ENCODE measurements at regions of chr14 and their contacts with region 1.

Region 1: GRCh38 chr14:77067632-77068514 is 30.2 kb upstream of the CIPC start:
- DNase-seq: peak; percentile 74
- H3K4me3 Mint-ChIP-seq: no peak overlapping the region
- H3K27ac Mint-ChIP-seq: no peak overlapping the region
- H3K4me1 Mint-ChIP-seq: no peaks in the 10 kb centered on the region
- H3K27me3 Mint-ChIP-seq: peaks cover 54% of the 10 kb centered on the region

Region 2: DNA sequence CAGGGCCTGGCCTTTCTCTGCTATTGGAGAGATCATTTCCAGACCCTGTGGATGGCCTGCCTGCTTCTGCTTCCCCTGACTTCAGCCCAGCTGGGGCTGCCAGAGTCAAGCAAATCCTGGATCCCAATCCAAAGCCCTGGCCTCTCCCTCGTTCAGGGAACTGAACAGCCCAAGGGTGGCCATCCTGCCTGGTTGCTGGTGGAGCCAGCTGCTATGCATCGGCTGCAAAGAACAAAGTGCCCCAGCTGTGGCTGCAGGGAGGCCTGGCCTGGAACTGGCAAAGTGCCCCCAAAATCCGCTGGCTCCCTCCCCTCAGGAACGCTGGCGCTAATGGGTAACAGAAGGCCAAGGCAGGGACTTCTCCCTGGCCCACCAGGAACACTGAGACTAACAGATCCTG is 185.2 kb before region 1 on chr14:
- CTCF ChIA-PET with region 1: interaction called, 1,049 read pairs
- DNase-seq: no peak
- H3K4me3 Mint-ChIP-seq: no peak overlapping the region
- H3K27ac Mint-ChIP-seq: no peak overlapping the region
- H3K4me1 Mint-ChIP-seq: peaks cover 12% of the 10 kb centered on the region
- H3K27me3 Mint-ChIP-seq: peaks cover 34% of the 10 kb centered on the region

Region 3: DNA sequence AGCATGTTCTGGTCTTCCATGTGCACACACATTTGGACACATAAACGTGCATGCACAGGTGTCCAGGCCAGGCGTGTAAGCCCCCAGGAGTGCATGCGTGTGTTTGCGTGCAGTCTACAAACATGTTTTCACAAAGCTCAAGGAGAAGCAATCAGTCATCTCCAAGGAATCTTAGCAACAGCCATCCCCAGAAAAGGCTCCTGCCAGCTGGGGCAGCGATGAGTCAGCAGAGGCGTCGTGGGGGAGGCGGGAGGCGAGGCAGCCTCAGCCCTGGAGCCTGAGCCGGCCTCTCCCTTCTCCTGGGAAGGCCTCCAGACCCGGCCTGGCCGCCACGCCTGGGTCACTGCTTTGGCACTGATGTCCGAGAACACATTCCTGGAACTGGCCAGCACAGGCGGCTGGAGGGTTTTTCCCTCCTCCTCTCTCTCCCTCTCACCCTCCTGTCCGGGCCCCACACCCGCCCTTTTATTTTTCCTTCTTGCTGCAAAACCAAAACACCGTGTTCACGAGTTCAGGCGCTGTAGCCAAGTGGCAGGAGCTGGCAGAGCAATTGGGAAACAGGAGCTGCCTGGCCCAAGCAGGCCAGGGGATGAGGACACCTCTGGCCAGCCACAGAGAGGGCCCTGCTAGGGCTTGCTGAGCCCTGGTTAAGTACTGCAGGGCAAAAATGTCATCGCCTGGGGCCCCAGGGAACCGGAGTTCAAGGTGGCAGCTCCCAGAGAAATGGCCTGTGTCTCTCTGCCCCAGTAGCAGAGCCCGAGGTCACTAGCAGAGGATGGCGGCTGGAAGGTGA is 148.9 kb before region 1 on chr14:
- CTCF ChIA-PET with region 1: interaction called, 273 read pairs
- DNase-seq: no peak
- H3K4me3 Mint-ChIP-seq: no peak overlapping the region
- H3K27ac Mint-ChIP-seq: no peak overlapping the region
- H3K4me1 Mint-ChIP-seq: peaks cover 78% of the 10 kb centered on the region
- H3K27me3 Mint-ChIP-seq: peaks cover 22% of the 10 kb centered on the region

Region 4: DNA sequence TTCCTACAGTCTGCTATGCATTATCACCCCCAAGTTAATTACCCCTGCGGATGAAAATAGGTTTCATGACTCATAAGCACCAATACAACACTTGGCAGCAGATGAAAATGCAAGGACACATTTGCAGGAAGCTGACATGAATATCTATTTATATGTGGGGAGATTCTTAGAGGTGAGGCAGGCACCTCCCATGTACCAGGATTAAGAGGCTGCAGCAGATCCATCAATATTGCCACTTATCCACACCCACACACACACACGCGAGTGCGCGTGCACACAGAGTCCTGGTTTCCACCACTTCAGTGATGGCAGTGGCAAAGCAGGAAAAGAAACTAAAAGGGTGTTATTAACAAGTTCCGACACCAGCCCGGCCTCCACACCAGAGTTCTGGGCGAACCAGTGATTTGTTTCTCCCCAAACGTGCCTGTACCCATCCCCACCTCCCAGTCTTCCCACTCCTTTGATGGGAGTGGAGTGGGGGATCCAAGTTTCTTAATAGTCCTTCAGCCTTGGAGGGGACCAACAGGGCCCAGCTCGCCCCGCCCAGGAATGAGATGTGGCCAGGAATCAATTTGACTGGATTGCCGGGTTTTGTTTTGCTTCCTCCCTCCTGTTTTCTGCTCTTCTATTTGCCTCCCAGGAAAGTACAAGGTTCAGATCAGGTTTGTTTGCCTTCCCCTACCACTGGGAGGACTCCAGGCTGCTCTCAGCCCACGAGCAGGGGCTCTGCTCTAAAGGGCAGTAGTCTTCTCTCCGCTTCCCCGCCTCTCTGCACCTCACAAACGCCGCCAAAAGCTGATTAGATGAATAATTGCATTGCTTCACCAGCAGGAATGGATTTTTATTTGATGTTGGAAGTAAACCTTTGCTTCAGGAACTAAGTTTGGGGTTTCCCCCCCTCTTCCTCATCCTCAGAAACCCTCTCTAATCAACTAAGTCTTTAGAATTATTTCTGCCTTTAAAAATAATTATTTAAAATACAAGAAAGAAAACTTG is 44.6 kb before region 1 on chr14:
- CTCF ChIA-PET with region 1: interaction called, 13 read pairs
- DNase-seq: no peak
- H3K4me3 Mint-ChIP-seq: peak overlapping the region; percentile 2
- H3K27ac Mint-ChIP-seq: peak overlapping the region; percentile 77
- H3K4me1 Mint-ChIP-seq: peaks cover 52% of the 10 kb centered on the region
- H3K27me3 Mint-ChIP-seq: peaks cover 4% of the 10 kb centered on the region

Region 5: GRCh38 chr14:77092676-77093075 is 24.8 kb after region 1 on chr14:
- CTCF ChIA-PET with region 1: interaction called, 28 read pairs
- DNase-seq: no peak
- H3K4me3 Mint-ChIP-seq: no peak overlapping the region
- H3K27ac Mint-ChIP-seq: no peak overlapping the region
- H3K4me1 Mint-ChIP-seq: peaks cover 24% of the 10 kb centered on the region
- H3K27me3 Mint-ChIP-seq: peaks cover 22% of the 10 kb centered on the region

Region 6: DNA sequence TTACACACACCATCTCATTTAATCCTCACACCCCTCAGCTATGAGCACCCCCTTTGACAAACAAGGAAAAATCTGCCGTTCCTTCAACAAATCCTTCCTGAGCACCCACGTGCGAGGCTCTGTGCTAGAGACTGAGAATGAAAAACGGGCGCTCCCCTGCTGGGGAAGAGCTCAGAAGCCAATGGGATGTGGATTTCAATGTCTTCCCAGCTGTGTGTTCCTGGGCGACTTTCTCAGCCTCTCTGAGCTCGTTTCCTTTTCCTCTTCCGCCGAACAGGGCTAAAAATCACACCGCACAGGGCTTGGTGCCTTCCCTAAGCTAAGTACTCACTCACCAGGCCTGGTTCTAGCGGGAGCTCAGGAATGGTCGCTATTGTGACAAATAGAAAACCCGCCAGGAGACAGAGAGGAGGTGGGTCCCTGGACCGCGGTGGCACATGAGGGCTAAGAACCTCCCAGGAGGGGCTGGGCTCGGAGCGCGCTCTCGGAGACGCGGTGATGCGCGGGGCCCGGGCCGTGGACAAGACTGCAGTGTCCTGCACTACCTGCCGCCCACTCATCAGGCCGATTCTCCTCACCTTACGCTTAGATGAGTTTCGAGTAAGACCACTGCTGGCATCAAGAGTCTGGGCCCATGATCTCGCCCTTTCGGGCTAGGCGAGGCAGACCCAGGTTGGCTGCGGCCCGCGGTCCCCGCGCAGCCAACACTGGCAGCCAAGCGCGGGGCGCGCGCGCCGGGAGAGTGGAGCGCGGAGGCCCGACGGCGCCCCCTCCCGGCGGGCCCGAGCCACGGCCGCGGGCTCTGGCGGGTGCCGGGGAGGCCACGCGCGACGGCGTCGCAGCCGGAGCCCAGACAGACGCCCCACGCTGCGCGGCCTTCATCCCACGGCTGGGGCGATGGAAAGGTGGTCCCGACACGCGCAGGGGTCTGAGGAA is 56.7 kb after region 1 on chr14:
- CTCF ChIA-PET with region 1: interaction called, 32 read pairs
- DNase-seq: peak; percentile 73
- H3K4me3 Mint-ChIP-seq: peak overlapping the region; percentile 74
- H3K27ac Mint-ChIP-seq: peak overlapping the region; percentile 83
- H3K4me1 Mint-ChIP-seq: peaks cover 54% of the 10 kb centered on the region
- H3K27me3 Mint-ChIP-seq: peaks cover 59% of the 10 kb centered on the region

Region 7: GRCh38 chr14:77170045-77170444 is 102.2 kb after region 1 on chr14:
- CTCF ChIA-PET with region 1: no interaction called
- DNase-seq: no peak
- H3K4me3 Mint-ChIP-seq: no peak overlapping the region
- H3K27ac Mint-ChIP-seq: no peak overlapping the region
- H3K4me1 Mint-ChIP-seq: no peaks in the 10 kb centered on the region
- H3K27me3 Mint-ChIP-seq: peaks cover 18% of the 10 kb centered on the region